MCF 10A (cell line): ENCODE measurements at regions of chr9 and their contacts with region 1.

Region 1: DNA sequence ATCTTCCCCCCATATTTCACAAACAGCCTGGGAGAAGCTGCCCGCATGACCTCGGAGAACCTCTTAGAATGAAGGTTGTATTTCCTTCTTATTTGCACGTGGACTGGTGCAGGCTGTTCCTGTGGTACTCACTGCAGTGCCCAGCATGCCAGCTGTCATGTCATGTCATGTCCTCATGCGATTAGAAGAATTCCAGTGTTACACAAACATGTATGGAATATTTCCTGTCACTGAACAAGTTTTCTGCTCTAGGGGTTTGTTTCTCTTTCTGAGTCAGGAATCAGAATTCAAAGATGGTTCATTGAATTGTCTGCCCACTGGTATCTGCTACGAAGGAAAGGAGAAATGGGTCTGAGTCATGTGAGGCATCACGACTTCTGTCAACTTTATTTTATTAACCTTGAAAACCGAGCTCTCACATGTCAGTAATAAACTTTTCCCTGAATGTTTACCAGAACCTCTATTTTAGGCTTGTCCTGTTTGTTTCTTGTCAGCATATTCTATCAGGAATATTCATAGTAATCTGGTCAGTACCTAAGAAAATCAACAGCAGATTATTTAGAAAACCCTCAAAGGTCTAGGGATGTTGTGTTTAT is 415.6 kb downstream of the GADD45G start:
- DNase-seq: peak; percentile 44
- H3K4me3 Mint-ChIP-seq: no peak overlapping the region
- H3K27ac Mint-ChIP-seq: no peak overlapping the region
- H3K4me1 Mint-ChIP-seq: peaks cover 14% of the 10 kb centered on the region
- H3K27me3 Mint-ChIP-seq: no peaks in the 10 kb centered on the region
- CTCF ChIP-seq: no peak

Region 2: DNA sequence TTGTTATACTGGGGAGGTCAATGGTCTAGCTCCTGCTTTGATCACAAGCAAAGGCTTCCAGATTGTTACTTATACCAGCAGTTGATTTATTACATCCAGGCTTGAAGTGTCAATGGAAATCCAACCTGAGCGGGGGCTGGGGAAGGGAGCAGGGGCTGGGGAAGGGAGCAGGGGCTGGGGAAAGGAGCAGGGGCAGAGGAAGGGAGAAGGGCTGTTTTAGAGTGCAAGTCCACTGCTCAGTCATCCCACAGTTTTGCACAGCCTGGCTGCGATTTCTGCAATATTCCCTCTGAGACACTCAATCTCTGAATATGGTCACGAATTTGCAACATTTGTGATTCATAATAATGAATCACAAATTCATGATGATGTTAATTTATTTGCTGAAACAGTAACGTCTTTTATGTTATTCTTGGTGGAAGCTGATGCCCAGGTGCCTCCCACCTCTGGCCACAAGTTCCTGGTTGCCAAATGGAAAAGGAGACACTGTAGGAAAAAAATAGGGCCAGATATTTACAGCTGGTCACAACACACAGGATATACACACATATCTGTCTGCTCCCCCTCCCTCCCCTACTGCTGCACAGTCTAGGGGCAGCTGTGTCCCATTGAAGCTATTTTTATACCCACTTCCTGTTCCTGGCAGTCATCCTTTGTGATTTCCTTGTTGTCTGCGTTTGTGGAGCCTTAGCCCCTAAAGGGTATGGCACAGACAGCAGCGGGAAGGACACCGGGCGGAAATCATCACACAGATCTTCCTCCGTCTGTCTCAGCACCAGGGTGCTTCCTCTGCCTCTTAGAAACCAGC is 90.5 kb before region 1 on chr9:
- CTCF ChIA-PET with region 1: no interaction called
- POLR2A ChIA-PET with region 1: no interaction called
- intact Hi-C with region 1: no loop called
- DNase-seq: peak; percentile 28
- H3K4me3 Mint-ChIP-seq: no peak overlapping the region
- H3K27ac Mint-ChIP-seq: no peak overlapping the region
- H3K4me1 Mint-ChIP-seq: peaks cover 10% of the 10 kb centered on the region
- H3K27me3 Mint-ChIP-seq: peaks cover 47% of the 10 kb centered on the region
- CTCF ChIP-seq: no peak

Region 3: GRCh38 chr9:89941875-89942274 is 78.5 kb before region 1 on chr9:
- CTCF ChIA-PET with region 1: no interaction called
- POLR2A ChIA-PET with region 1: interaction called, 12 read pairs
- intact Hi-C with region 1: no loop called
- DNase-seq: peak; percentile 58
- H3K4me3 Mint-ChIP-seq: no peak overlapping the region
- H3K27ac Mint-ChIP-seq: no peak overlapping the region
- H3K4me1 Mint-ChIP-seq: peaks cover 11% of the 10 kb centered on the region
- H3K27me3 Mint-ChIP-seq: peaks cover 58% of the 10 kb centered on the region
- CTCF ChIP-seq: no peak

Region 4: DNA sequence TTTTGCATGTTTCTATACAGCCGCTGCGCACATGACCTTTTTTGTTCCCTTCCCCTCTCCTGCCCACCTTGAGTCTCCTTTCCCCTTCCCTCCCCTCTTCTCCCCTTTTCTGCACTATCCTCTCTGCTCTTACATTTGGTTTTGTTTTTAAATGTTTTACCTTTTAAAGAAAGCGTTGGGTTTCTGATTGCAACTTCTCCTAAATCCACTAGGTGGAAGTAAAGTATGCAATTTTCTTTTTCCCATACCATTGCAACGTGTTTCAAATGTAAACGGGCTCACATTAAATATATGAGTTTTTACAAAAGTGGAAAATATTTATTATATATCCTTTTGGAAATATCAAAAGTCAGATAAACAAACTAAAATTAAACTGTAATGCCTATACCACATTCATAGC is 121.3 kb after region 1 on chr9:
- CTCF ChIA-PET with region 1: no interaction called
- POLR2A ChIA-PET with region 1: no interaction called
- intact Hi-C with region 1: no loop called
- DNase-seq: peak; percentile 29
- H3K4me3 Mint-ChIP-seq: no peak overlapping the region
- H3K27ac Mint-ChIP-seq: no peak overlapping the region
- H3K4me1 Mint-ChIP-seq: no peaks in the 10 kb centered on the region
- H3K27me3 Mint-ChIP-seq: peaks cover 73% of the 10 kb centered on the region
- CTCF ChIP-seq: peak; percentile 41

Region 5: DNA sequence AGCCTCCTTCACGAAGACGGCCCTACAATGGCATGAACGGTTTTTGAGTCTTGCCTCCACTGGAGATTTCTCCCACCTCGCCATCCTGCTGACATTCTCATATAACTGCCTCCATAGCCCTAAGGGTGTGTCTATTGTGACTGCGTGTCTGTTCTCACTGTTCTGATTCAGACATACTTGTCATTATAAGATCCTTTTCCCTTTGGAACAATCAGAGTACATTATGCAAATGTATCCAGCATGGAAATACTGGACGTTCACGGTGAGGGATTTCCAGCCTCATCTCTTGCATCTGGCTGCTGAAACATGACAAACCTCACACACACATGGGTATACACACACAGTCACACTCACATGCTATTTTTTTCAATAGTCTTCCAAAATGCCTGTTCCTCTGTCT is 220.2 kb after region 1 on chr9:
- CTCF ChIA-PET with region 1: no interaction called
- POLR2A ChIA-PET with region 1: no interaction called
- intact Hi-C with region 1: no loop called
- DNase-seq: no peak
- H3K4me3 Mint-ChIP-seq: no peak overlapping the region
- H3K27ac Mint-ChIP-seq: no peak overlapping the region
- H3K4me1 Mint-ChIP-seq: no peaks in the 10 kb centered on the region
- H3K27me3 Mint-ChIP-seq: peaks cover 74% of the 10 kb centered on the region
- CTCF ChIP-seq: no peak